T-cell (primary cell): ENCODE measurements at regions of chr2 and their contacts with region 1.

Region 1: DNA sequence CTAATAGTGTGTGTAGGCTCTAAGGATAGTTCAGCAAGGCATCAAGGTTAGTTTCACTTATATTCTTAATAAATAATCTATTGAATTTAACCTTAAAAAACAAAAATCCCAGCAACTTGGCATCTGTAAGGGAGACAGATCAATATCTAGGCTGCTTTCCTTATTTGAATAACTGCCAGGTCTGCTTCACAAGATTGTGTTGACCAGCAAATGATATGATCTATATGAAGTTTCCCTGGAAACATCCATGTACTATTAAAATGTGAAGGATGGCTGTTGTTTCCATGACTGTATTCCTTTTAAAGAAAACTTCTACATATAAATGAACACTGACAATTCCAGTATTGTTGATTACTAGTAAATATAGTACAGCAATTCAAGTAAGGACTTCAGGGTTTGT is 109.4 kb downstream of the SPTBN1 start:
- DNase-seq: no peak
- ATAC-seq: no peak
- H3K4me3 ChIP-seq: no peak overlapping the region
- H3K4me3 Mint-ChIP-seq: peak overlapping the region in 1 of 3 donors; percentile 98
- H3K27ac ChIP-seq: no peak overlapping the region
- H3K27ac Mint-ChIP-seq: peak overlapping the region; percentile 84 to 87
- H3K4me1 ChIP-seq: peaks cover 64 to 73% of the 10 kb centered on the region in 2 experiments
- H3K4me1 Mint-ChIP-seq: peaks cover 84 to 98% (median 90%) of the 10 kb centered on the region in 3 donors
- H3K27me3 ChIP-seq: no peaks in the 10 kb centered on the region
- H3K27me3 Mint-ChIP-seq: no peaks in the 10 kb centered on the region

Region 2: GRCh38 chr2:54735636-54736035 is 170.1 kb after region 1 on chr2:
- CTCF ChIA-PET with region 1: no interaction called
- POLR2A ChIA-PET with region 1: interaction called, 3 to 10 read pairs
- DNase-seq: no peak
- ATAC-seq: no peak
- H3K4me3 ChIP-seq: no peak overlapping the region
- H3K4me3 Mint-ChIP-seq: no peak overlapping the region
- H3K27ac ChIP-seq: no peak overlapping the region
- H3K27ac Mint-ChIP-seq: no peak overlapping the region
- H3K4me1 ChIP-seq: no peaks in the 10 kb centered on the region
- H3K4me1 Mint-ChIP-seq: no peaks in the 10 kb centered on the region
- H3K27me3 ChIP-seq: peaks cover 0 to 7% of the 10 kb centered on the region in 2 experiments
- H3K27me3 Mint-ChIP-seq: peaks cover 16 to 27% of the 10 kb centered on the region in 2 donors